HCT116 (cell line): ENCODE measurements at regions of chr6 and their contacts with region 1.

Region 1: GRCh38 chr6:26537846-26538571 is at the start of gene HMGN4:
- DNase-seq: peak; percentile 81
- ATAC-seq: peak; percentile 73
- H3K4me3 ChIP-seq: peak within 1 kb of the TSS; percentile 74 to 89
- H3K27ac ChIP-seq: peak within 1 kb of the TSS; percentile 72
- H3K4me1 ChIP-seq: peaks cover 14 to 51% of the 10 kb centered on the region in 2 experiments
- H3K27me3 ChIP-seq: no peaks in the 10 kb centered on the region
- CTCF ChIP-seq: no peak
- POLR2A ChIP-seq: no peak
- RAD21 ChIP-seq: 0 out of 2 replicates have a peak, but pooled peaks have one; percentile 17
- total RNA-seq, gene HMGN4: 73.8 TPM

Region 2: DNA sequence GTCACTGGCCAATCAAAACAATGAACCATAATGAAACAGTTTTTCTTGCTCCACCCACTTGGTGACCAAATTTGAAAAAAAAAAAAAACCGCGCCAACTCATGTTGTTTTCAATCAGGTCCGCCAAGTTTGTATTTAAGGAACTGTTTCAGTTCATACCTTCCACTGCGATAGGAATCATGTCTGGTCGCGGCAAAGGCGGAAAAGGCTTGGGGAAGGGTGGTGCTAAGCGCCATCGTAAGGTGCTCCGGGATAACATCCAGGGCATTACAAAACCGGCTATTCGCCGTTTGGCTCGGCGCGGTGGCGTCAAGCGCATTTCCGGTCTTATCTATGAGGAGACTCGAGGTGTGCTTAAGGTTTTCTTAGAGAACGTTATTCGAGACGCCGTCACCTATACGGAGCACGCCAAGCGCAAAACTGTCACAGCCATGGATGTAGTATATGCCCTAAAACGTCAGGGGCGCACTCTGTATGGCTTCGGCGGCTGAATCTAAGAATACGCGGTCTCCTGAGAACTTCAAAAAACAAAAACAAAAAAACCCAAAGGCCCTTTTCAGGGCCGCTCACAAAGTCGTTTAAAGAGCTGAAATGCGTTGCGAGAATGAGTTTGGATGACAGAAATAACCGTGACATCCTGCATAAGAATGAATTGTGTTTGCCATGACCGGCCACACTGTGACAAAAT is 434.1 kb before region 1 on chr6:
- CTCF ChIA-PET with region 1: no interaction called
- POLR2A ChIA-PET with region 1: no interaction called
- RAD21 ChIA-PET with region 1: no interaction called
- intact Hi-C with region 1: no loop called
- DNase-seq: peak; percentile 95
- ATAC-seq: peak; percentile 74
- H3K4me3 ChIP-seq: peak overlapping the region; percentile 48 to 59
- H3K27ac ChIP-seq: peak overlapping the region; percentile 94
- H3K4me1 ChIP-seq: peaks cover 17 to 39% of the 10 kb centered on the region in 2 experiments
- H3K27me3 ChIP-seq: no peaks in the 10 kb centered on the region
- CTCF ChIP-seq: peak in 2 of 3 experiments; percentile 35 to 40; a peak in 2 of 6 replicates
- POLR2A ChIP-seq: peak; percentile 99
- RAD21 ChIP-seq: peak; percentile 42

Region 3: GRCh38 chr6:26175428-26176181 is 362.4 kb before region 1 on chr6:
- CTCF ChIA-PET with region 1: no interaction called
- POLR2A ChIA-PET with region 1: no interaction called
- RAD21 ChIA-PET with region 1: no interaction called
- intact Hi-C with region 1: loop called (anchors 10 kb)
- DNase-seq: no peak
- ATAC-seq: no peak
- H3K4me3 ChIP-seq: no peak overlapping the region
- H3K27ac ChIP-seq: peak overlapping the region; percentile 46; the same call in 1 of the 2 replicates
- H3K4me1 ChIP-seq: peaks cover 11 to 28% of the 10 kb centered on the region in 2 experiments
- H3K27me3 ChIP-seq: no peaks in the 10 kb centered on the region
- CTCF ChIP-seq: peak; percentile 62 to 75 (median 73)
- POLR2A ChIP-seq: no peak
- RAD21 ChIP-seq: peak; percentile 83

Region 4: DNA sequence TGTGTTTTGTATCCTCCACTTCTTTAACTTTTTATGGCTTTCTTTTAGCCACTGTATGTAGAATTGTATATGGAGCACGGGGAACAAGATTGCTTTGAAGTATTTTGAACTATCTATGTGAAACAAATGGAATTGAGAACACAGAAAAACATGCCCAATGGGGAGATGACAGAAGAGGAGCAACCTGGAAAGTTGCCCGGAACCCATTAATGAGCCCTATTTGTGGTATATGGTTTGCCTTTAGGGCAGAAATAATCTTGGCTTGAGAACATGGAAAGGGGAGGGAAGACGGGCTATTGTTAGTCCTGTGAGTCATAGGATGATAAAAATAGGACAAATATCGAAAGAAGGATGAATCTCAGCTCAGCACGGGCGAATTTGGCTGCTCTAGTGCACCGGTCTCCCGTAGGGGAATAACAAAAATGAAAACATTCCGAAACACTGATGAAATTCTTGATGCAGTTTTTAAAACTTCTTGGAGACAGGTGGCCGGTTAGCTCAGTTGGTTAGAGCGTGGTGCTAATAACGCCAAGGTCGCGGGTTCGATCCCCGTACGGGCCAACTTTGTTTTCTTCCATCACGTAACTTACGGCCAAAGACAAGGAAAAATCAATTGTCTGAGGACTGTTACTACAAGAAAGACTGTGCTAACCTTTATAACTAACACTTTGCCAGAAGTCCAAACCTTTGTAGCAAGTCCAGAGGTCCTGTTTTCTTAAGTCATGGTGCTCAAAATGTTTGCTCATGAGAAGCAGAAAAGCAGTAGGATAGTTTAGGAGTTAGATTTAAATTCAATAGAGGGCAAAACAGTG is 15.8 kb after region 1 on chr6:
- CTCF ChIA-PET with region 1: interaction called, 3 read pairs
- POLR2A ChIA-PET with region 1: interaction called, 8 read pairs
- RAD21 ChIA-PET with region 1: no interaction called
- intact Hi-C with region 1: loop called (anchors 2 kb)
- DNase-seq: peak; percentile 81
- ATAC-seq: peak; percentile 58
- H3K4me3 ChIP-seq: peak overlapping the region; percentile 36 to 50
- H3K27ac ChIP-seq: peak overlapping the region; percentile 53
- H3K4me1 ChIP-seq: peaks cover 14 to 45% of the 10 kb centered on the region in 2 experiments
- H3K27me3 ChIP-seq: no peaks in the 10 kb centered on the region
- CTCF ChIP-seq: no peak
- POLR2A ChIP-seq: no peak
- RAD21 ChIP-seq: peak; percentile 9; the same call in 1 of the 2 replicates